Calu3 (cell line): ENCODE measurements at regions of chr6 and their contacts with region 1.

Region 1: GRCh38 chr6:167547751-167548150 is 222.9 kb downstream of the TTLL2 start:
- DNase-seq: no peak
- H3K4me3 Mint-ChIP-seq: no peak overlapping the region
- H3K27ac Mint-ChIP-seq: no peak overlapping the region
- H3K4me1 Mint-ChIP-seq: no peaks in the 10 kb centered on the region
- H3K27me3 Mint-ChIP-seq: peaks cover 8% of the 10 kb centered on the region
- CTCF ChIP-seq: no peak

Region 2: GRCh38 chr6:167795321-167795811 is 247.6 kb after region 1 on chr6:
- CTCF ChIA-PET with region 1: interaction called, 11 read pairs
- intact Hi-C with region 1: no loop called
- DNase-seq: no peak
- H3K4me3 Mint-ChIP-seq: peak overlapping the region; percentile 64
- H3K27ac Mint-ChIP-seq: no peak overlapping the region
- H3K4me1 Mint-ChIP-seq: peaks cover 31% of the 10 kb centered on the region
- H3K27me3 Mint-ChIP-seq: no peaks in the 10 kb centered on the region
- CTCF ChIP-seq: no peak

Region 3: DNA sequence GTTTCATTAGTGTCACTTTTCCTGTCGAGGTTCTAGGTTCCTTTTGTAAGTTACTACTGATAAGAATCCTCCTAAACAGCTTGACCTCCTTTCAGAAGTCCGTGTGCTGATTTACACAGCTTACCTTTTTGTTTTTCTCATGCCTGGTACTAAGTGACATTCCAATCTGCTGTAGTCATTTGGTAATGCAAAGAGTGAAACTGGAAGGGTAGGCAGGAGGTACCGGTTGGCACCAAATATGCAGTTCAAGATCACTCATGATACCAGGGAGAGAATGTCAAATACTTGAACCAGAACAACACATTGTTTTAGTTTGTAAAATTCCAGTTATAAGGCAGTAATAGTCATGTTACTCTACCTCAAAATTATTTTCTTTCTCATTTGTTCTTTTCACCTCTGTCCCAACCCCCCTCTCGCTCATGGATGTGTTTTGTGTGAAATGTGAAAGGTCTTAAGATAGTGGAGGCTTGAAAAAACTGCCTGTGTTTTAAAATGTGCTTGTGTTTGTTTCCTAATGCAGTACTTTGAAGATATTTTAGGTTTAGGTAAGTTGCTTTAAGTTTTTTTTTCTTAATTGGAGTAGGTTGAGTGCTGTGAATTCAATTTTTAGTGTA is 302.2 kb after region 1 on chr6:
- CTCF ChIA-PET with region 1: no interaction called
- intact Hi-C with region 1: loop called (anchors 5 kb)
- DNase-seq: peak; percentile 57
- H3K4me3 Mint-ChIP-seq: peak overlapping the region; percentile 52
- H3K27ac Mint-ChIP-seq: peak overlapping the region; percentile 81
- H3K4me1 Mint-ChIP-seq: peaks cover 73% of the 10 kb centered on the region
- H3K27me3 Mint-ChIP-seq: no peaks in the 10 kb centered on the region
- CTCF ChIP-seq: no peak